ENCODE measurements at regions of chr6 and their contacts with region 1.

Region 1: DNA sequence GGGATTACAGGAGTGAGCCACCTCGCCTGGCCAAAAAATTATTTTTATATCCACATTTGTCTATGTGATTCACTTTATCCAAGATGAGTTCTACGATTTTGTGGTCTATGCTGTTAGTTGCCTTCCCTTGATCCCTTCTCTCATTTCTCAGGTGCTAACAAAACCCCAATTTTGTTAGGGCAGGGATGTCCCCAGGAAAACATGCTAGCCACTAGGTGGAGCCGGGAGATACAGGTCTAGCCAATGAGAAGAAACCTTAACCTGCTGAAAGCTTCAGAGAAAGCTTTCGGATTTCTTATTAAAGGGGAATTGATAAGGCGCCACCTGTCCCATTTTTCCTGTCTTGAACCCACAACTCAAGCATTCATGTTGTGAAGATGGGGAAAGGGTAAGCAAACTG is 167.4 kb upstream of the OLIG3 start:
- DNase-seq: peak in 5 of 9 donors; percentile 11 to 45 (median 28)
- ATAC-seq: no peak
- H3K4me3 ChIP-seq: no peak overlapping the region
- H3K4me3 Mint-ChIP-seq: no peak overlapping the region
- H3K27ac ChIP-seq: no peak overlapping the region
- H3K27ac Mint-ChIP-seq: no peak overlapping the region
- H3K4me1 ChIP-seq: peaks cover 0 to 4% of the 10 kb centered on the region in 2 donors
- H3K4me1 Mint-ChIP-seq: peaks cover 0 to 43% (median 0%) of the 10 kb centered on the region in 7 donors
- H3K27me3 ChIP-seq: no peaks in the 10 kb centered on the region
- H3K27me3 Mint-ChIP-seq: peaks cover 0 to 11% (median 0%) of the 10 kb centered on the region in 5 donors

Region 2: DNA sequence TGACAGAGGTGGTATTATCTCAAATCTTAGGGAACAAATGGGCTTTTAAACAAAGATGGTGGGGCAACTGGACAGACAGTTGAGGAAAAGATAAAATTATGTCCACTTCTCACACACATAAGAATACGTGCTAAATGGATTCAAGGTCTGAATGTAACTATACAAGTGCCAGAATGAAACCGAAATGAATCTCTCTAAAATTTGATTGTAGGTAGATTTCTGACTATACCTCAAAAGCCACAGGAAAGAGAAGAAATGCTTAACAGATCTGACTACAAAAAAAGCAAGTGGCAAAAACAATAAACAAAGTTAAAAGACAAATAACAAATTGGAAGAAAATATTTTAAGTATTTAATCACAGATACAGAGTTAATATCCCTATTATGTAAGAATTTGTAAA is 15.3 kb after region 1 on chr6:
- CTCF ChIA-PET with region 1: no interaction called
- POLR2A ChIA-PET with region 1: interaction called, 4 read pairs
- intact Hi-C with region 1: loop called in 1 of 2 experiments (anchors 1 kb)
- DNase-seq: no peak
- ATAC-seq: no peak
- H3K4me3 ChIP-seq: no peak overlapping the region
- H3K4me3 Mint-ChIP-seq: peak overlapping the region in 1 of 10 donors; percentile 67
- H3K27ac ChIP-seq: no peak overlapping the region
- H3K27ac Mint-ChIP-seq: peak overlapping the region in 1 of 9 donors; percentile 88
- H3K4me1 ChIP-seq: peaks cover 0 to 8% of the 10 kb centered on the region in 2 donors
- H3K4me1 Mint-ChIP-seq: peaks cover 0 to 52% (median 4%) of the 10 kb centered on the region in 7 donors
- H3K27me3 ChIP-seq: no peaks in the 10 kb centered on the region
- H3K27me3 Mint-ChIP-seq: peaks cover 5 to 36% (median 14%) of the 10 kb centered on the region in 5 donors

Region 3: DNA sequence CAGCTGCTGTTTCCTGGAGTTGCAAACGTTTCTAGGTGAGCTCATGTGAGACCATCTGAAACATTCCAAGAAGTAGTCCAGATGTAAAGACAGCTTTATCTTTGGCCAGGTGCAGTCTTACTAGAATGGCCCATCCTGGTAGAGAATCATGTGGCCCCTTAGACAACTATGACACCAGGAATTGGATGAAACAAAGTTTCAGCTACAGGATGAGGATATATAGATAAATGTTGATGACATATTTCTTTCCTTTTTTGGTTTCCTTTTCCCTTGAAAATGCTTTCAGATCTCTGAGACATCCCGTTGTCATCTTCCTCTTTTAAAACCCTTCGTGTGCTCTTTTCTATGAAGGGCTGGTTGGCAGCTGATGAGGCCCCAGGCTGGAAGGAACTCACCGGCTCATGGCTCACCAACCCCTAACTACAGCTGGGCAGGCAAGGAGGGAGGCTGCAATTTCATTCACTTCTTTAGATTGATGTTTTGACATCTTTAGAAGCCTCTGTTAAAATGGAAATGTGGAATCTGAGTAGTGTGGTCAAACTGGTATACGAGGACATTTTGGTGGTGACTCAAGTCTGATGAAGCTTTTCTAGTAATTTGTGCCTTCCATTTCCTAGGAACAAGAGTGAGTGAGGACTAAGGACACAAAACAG is 37.6 kb after region 1 on chr6:
- CTCF ChIA-PET with region 1: no interaction called
- POLR2A ChIA-PET with region 1: no interaction called
- intact Hi-C with region 1: loop called in 1 of 2 experiments (anchors 1 kb)
- DNase-seq: no peak
- ATAC-seq: peak; percentile 81
- H3K4me3 ChIP-seq: no peak overlapping the region
- H3K4me3 Mint-ChIP-seq: peak overlapping the region in 9 of 10 donors; percentile 3 to 84 (median 40)
- H3K27ac ChIP-seq: no peak overlapping the region
- H3K27ac Mint-ChIP-seq: peak overlapping the region; percentile 22 to 98 (median 49)
- H3K4me1 ChIP-seq: peaks cover 11 to 14% of the 10 kb centered on the region in 2 donors
- H3K4me1 Mint-ChIP-seq: peaks cover 11 to 56% (median 15%) of the 10 kb centered on the region in 7 donors
- H3K27me3 ChIP-seq: no peaks in the 10 kb centered on the region
- H3K27me3 Mint-ChIP-seq: peaks cover 0 to 22% (median 5%) of the 10 kb centered on the region in 5 donors